Common myeloid progenitor, CD34-positive (primary cell): ENCODE measurements at regions of chr1 and their contacts with region 1.

Region 1: DNA sequence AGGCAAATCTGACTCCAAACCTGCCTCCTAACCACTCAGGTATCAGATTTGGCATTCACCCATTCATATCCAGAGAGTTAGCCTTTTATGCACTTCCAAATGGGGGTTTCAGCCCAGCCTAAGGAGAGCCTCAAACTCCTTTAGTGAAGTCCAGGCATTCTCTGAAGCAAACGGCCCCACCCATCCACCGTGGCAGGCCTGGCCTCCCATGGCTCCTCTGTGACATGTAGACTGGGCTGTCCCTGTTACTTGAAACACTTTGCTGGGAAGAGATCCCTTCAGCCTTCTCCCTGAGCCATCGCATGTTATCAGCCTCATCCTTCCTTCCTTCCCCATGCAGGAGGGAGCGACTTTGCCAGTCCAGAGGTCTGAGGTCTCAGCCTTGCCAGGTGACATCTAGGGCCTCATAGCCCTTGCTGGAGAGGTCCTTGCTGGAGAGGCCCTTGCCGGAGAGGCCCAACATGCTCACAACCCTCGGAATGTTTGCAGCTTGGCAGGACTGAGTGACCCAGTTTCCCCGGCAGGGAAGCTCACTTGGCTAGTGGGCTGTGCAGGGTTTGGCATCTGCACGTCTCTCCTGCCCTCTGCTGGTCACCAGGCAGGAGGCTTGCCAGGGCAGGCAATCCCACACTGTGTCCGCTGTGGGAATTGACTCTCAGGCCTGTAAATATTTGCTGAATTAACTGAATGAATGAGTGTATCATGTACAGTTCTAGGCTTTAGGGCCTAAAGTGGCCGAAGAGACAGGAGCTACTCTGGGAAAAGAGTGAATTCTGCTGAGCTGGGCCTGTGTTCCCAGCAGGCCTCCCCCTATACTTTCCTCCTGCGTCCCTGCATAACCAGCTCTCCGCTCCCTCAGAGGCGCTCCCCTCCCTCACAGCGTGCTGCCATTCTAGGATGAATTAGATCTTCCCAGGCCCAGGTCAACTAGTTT is 26.7 kb upstream of the RBM15 start:
- DNase-seq: peak; percentile 77 to 89 (median 84)
- H3K4me3 ChIP-seq: no peak overlapping the region
- H3K27ac ChIP-seq: no peak overlapping the region
- H3K4me1 ChIP-seq: peaks cover 0 to 3% (median 0%) of the 10 kb centered on the region in 4 experiments
- H3K27me3 ChIP-seq: peaks cover 0 to 2% (median 0%) of the 10 kb centered on the region in 5 experiments

Region 2: DNA sequence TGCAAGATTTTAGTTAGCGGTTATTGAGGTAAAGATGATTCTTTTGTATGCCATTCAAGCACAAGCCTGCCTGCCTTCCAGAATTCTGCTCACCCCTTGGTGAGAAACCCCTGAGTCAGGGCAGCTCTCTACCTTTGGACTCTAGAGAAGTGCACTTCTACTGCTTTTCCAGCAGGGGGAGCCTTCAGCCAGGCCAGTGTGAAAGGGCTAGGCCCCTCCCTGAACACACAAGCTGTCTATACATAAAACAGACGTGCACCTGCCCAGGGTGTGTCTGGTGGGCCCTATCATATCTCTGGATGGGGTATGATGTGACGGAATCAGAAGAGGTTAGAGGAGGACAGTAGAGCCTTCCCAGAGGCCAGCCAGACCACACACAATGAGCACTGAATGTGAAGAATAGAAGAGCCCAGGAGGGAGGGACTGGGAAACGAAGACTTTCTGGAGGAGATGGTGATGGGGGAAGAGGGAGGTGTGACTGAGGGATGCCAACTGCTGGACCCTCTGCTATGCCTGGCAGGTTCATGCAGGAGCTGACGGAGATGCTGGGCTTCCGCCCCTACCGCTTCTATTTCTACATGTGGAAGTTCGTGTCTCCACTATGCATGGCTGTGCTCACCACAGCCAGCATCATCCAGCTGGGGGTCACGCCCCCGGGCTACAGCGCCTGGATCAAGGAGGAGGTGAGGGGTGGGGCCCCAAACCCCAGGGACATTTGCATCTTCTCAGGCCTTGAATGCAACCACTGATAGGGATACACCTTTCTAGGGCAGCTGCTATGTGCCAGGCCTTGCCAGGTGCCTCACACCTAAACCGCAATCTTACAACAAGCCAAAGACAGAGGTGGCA is 115.3 kb before region 1 on chr1:
- CTCF ChIA-PET with region 1: interaction called, 457 read pairs
- POLR2A ChIA-PET with region 1: no interaction called
- DNase-seq: peak; percentile 57 to 76 (median 76)
- H3K4me3 ChIP-seq: no peak overlapping the region
- H3K27ac ChIP-seq: no peak overlapping the region
- H3K4me1 ChIP-seq: no peaks in the 10 kb centered on the region
- H3K27me3 ChIP-seq: peaks cover 0 to 4% (median 0%) of the 10 kb centered on the region in 5 experiments

Region 3: GRCh38 chr1:110216844-110217444 is 95.5 kb before region 1 on chr1:
- CTCF ChIA-PET with region 1: interaction called, 12 read pairs
- POLR2A ChIA-PET with region 1: no interaction called
- DNase-seq: no peak
- H3K4me3 ChIP-seq: no peak overlapping the region
- H3K27ac ChIP-seq: no peak overlapping the region
- H3K4me1 ChIP-seq: peaks cover 0 to 9% (median 6%) of the 10 kb centered on the region in 4 experiments
- H3K27me3 ChIP-seq: peaks cover 0 to 12% (median 10%) of the 10 kb centered on the region in 5 experiments

Region 4: GRCh38 chr1:110300412-110301085 is 11.9 kb before region 1 on chr1:
- CTCF ChIA-PET with region 1: interaction called, 10 read pairs
- POLR2A ChIA-PET with region 1: interaction called, 3 read pairs
- DNase-seq: no peak
- H3K4me3 ChIP-seq: no peak overlapping the region
- H3K27ac ChIP-seq: no peak overlapping the region
- H3K4me1 ChIP-seq: no peaks in the 10 kb centered on the region
- H3K27me3 ChIP-seq: peaks cover 0 to 6% (median 0%) of the 10 kb centered on the region in 5 experiments